Transverse colon (tissue), 4 donors: ENCODE measurements at regions of chr1 and their contacts with region 1.

Region 1: DNA sequence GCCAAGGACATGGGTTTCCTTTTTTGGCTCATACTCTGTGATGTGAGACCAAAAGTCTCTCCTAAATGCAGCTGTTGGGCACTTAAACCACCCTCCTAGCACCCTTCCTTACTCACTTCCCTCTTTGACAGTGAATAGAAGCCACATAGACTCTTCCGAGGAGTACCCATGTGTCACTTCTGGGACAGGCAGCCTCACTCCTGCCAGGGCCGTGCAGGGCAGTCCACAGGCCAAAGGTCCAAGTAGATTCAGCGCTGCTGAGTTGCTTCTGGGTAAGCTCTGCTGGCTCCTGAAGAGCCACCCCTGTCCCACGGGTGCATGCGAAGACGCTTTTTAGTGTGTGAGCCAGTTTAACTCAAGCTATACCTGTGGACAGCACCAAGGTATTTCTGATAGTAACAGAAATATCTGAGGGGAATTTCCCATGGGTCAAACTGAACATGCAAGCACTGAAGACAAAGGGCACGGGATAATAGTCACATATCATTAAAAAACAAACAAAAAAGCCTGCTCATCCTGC is 36.8 kb upstream of the BMP8B start:
- DNase-seq: peak; percentile 72
- H3K4me3 ChIP-seq: no peak overlapping the region
- H3K27ac ChIP-seq: peak overlapping the region; percentile 59 to 79 (median 76)
- H3K4me1 ChIP-seq: peaks cover 5 to 36% (median 23%) of the 10 kb centered on the region in 4 donors
- H3K27me3 ChIP-seq: no peaks in the 10 kb centered on the region
- CTCF ChIP-seq: no peak
- EP300 ChIP-seq: no peak
- POLR2A ChIP-seq: peak; percentile 37

Region 2: DNA sequence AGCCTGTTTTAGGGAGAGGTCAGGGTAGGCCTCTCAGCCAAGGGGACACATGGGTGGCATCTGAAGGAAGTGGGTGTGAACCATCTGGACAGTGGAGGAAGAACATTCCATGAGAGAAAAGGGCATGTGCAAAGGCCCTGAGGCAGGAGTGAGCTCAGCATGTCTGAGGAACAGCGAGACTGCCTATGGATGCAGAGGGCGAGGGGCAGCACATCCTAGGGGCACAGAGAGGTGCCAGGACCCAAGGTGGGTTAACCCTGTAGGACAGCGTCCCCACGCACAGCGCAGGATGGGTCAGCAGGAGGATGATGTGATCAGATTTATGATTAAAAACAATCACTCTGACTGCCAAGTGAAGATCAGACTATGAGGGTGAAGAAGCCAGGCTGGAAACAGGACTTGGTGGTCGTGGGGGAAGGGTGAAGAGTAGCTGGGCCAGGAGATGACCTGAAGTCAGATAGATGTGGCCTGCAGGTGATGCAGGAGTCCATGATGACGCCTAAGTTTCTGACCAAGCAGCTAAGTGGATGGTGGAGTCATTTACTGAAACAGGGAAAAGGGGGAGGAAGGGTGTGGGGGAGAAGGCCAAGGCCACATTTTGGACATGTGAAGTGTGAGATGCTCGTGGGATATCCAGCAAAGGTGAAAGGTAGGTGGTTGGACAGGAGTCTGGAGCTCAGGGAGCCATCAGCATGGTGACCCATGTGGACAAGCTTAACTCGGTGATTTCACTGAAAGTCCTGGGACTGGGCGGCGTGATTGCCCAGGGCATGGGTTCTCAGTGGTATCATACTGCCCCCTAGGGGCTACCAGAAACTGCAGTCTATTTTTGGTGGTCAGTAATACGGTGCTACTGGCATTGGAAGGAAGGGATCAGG is 286.7 kb before region 1 on chr1:
- in situ Hi-C with region 1: no loop called
- intact Hi-C with region 1: no loop called
- DNase-seq: peak; percentile 76
- H3K4me3 ChIP-seq: no peak overlapping the region
- H3K27ac ChIP-seq: no peak overlapping the region
- H3K4me1 ChIP-seq: peaks cover 0 to 4% (median 0%) of the 10 kb centered on the region in 4 donors
- H3K27me3 ChIP-seq: no peaks in the 10 kb centered on the region
- CTCF ChIP-seq: peak; percentile 87 to 95 (median 91)
- EP300 ChIP-seq: no peak
- POLR2A ChIP-seq: no peak

Region 3: DNA sequence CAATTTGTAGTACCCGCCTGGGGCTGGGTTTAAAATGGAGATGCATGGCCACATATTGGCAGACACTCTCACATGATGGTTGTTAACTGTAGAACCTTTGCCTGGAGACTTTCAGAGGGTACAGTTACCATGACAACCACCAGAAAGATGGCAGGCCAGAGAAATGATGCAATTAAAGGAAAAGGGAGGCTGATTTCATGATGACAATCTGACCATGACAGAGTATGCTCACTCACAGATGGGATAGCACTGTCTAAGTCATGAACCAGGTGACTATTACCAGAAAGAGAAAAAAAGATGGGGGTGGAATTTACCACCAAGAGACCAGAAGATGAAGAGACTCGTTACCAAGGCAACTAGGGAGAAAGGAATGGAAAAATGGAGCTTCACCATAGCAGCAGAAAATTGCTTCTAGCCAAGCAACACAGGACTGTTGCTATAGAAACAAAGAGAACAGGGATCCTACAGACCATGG is 61.3 kb after region 1 on chr1:
- in situ Hi-C with region 1: loop called in 1 of 4 experiments (anchors 10 kb)
- intact Hi-C with region 1: no loop called
- DNase-seq: no peak
- H3K4me3 ChIP-seq: no peak overlapping the region
- H3K27ac ChIP-seq: no peak overlapping the region
- H3K4me1 ChIP-seq: peaks cover 7 to 13% (median 12%) of the 10 kb centered on the region in 4 donors
- H3K27me3 ChIP-seq: no peaks in the 10 kb centered on the region
- CTCF ChIP-seq: no peak
- EP300 ChIP-seq: no peak
- POLR2A ChIP-seq: no peak

Region 4: DNA sequence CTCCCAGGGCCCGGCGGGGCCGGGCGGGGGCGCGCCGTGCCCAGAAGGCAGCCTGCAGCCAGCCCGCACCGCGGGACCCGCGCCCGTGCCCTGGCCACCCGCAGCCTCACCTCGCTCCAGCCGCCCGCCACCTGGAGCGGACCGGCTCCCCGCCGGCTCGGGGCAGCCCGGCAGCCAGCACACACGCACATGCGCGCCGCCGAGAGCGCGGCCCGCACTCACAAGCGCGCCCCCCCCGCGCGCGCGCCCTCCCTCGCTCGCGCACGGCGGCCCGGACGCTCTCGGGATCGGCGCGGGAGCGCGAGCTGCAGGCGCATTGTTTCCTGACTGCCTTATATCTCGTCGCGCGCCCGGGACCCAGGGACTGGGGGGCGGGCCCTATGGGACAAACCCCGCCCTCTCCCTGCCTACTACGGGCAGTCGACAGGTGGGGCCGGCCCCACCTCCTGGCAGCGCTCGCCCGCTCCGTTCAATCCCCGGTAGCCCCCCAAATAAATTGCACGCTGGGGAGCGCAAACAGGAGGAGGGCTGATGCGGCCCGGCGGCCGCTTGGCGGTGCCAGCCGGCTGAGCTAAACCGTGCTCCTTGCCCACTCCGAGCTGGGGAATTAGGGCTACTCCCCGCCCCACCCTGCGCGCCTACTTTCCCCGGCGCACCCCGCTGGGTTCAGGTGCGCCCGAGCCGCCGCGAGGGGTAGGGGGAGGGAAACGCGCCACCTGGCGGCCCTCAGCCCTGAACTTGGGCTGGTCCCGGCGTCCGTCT is 76.4 kb after region 1 on chr1 and contains the start of gene MYCL:
- in situ Hi-C with region 1: loop called in 1 of 4 experiments (anchors 5 kb)
- intact Hi-C with region 1: no loop called
- DNase-seq: peak; percentile 92
- H3K4me3 ChIP-seq: peak within 1 kb of the TSS; percentile 46 to 73 (median 68)
- H3K27ac ChIP-seq: peak within 1 kb of the TSS; percentile 68 to 87 (median 84)
- H3K4me1 ChIP-seq: peaks cover 4 to 34% (median 21%) of the 10 kb centered on the region in 4 donors
- H3K27me3 ChIP-seq: peaks cover 53% of the 10 kb centered on the region
- CTCF ChIP-seq: peak; percentile 69 to 92 (median 77)
- EP300 ChIP-seq: no peak
- POLR2A ChIP-seq: peak; percentile 69
- total RNA-seq, gene MYCL: 14.2 to 27.3 (median 15.8) TPM

Region 5: GRCh38 chr1:40122855-40123254 is 297.4 kb after region 1 on chr1:
- in situ Hi-C with region 1: no loop called
- intact Hi-C with region 1: no loop called
- DNase-seq: no peak
- H3K4me3 ChIP-seq: no peak overlapping the region
- H3K27ac ChIP-seq: no peak overlapping the region
- H3K4me1 ChIP-seq: no peaks in the 10 kb centered on the region
- H3K27me3 ChIP-seq: no peaks in the 10 kb centered on the region
- CTCF ChIP-seq: no peak
- EP300 ChIP-seq: no peak
- POLR2A ChIP-seq: no peak